Stomach (tissue), 19 donors: ENCODE measurements at regions of chr18 and their contacts with region 1.

Region 1: GRCh38 chr18:43271593-43272432 is 5.5 kb downstream of the SYT4 start:
- DNase-seq: peak in 1 of 2 donors; percentile 74
- H3K4me3 ChIP-seq: no peak overlapping the region
- H3K27ac ChIP-seq: no peak overlapping the region
- H3K4me1 ChIP-seq: peaks cover 0 to under 1% (median 0%) of the 10 kb centered on the region in 4 donors
- H3K27me3 ChIP-seq: no peaks in the 10 kb centered on the region
- CTCF ChIP-seq: peak in 5 of 7 experiments; percentile 46 to 77 (median 67)
- EP300 ChIP-seq: no peak
- POLR2A ChIP-seq: no peak

Region 2: GRCh38 chr18:42298759-42299675 is 972.8 kb before region 1 on chr18:
- intact Hi-C with region 1: loop called (anchors 5 kb)
- DNase-seq: peak; percentile 79 to 90
- H3K4me3 ChIP-seq: peak overlapping the region in 3 of 4 donors; percentile 20 to 29 (median 24)
- H3K27ac ChIP-seq: peak overlapping the region in 1 of 5 donors; percentile 56
- H3K4me1 ChIP-seq: peaks cover 0 to 10% (median 6%) of the 10 kb centered on the region in 4 donors
- H3K27me3 ChIP-seq: no peaks in the 10 kb centered on the region
- CTCF ChIP-seq: peak in 5 of 7 experiments; percentile 60 to 89 (median 84)
- EP300 ChIP-seq: no peak
- POLR2A ChIP-seq: no peak

Region 3: GRCh38 chr18:43389163-43389562 is 117.3 kb after region 1 on chr18:
- intact Hi-C with region 1: no loop called
- DNase-seq: peak in 1 of 2 donors; percentile 1
- H3K4me3 ChIP-seq: no peak overlapping the region
- H3K27ac ChIP-seq: no peak overlapping the region
- H3K4me1 ChIP-seq: peaks cover 0 to 3% (median 0%) of the 10 kb centered on the region in 4 donors
- H3K27me3 ChIP-seq: no peaks in the 10 kb centered on the region
- CTCF ChIP-seq: no peak
- EP300 ChIP-seq: no peak
- POLR2A ChIP-seq: no peak

Region 4: GRCh38 chr18:43442571-43442970 is 170.8 kb after region 1 on chr18:
- intact Hi-C with region 1: no loop called
- DNase-seq: no peak
- H3K4me3 ChIP-seq: no peak overlapping the region
- H3K27ac ChIP-seq: no peak overlapping the region
- H3K4me1 ChIP-seq: no peaks in the 10 kb centered on the region
- H3K27me3 ChIP-seq: no peaks in the 10 kb centered on the region
- CTCF ChIP-seq: no peak
- EP300 ChIP-seq: no peak
- POLR2A ChIP-seq: no peak